Activated CD4-positive, alpha-beta memory T cell treated with anti-CD3 and anti-CD28 coated beads for 36 hours (primary cell): ENCODE measurements at regions of chr12 and their contacts with region 1.

Region 1: GRCh38 chr12:674272-674781 is 11.1 kb upstream of the NINJ2 start:
- DNase-seq: peak; percentile 90
- H3K4me3 Mint-ChIP-seq: peak overlapping the region; percentile 70
- H3K27ac Mint-ChIP-seq: peak overlapping the region; percentile 85
- H3K4me1 Mint-ChIP-seq: peaks cover 65% of the 10 kb centered on the region
- H3K27me3 Mint-ChIP-seq: peaks cover 8% of the 10 kb centered on the region

Region 2: GRCh38 chr12:662566-663292 is 11.6 kb before region 1 on chr12:
- CTCF ChIA-PET with region 1: interaction called, 8 read pairs
- POLR2A ChIA-PET with region 1: interaction called, 4 read pairs
- intact Hi-C with region 1: loop called (anchors 1 kb)
- DNase-seq: peak; percentile 4
- H3K4me3 Mint-ChIP-seq: peak overlapping the region; percentile 52
- H3K27ac Mint-ChIP-seq: peak overlapping the region; percentile 65
- H3K4me1 Mint-ChIP-seq: peaks cover 50% of the 10 kb centered on the region
- H3K27me3 Mint-ChIP-seq: no peaks in the 10 kb centered on the region

Region 3: DNA sequence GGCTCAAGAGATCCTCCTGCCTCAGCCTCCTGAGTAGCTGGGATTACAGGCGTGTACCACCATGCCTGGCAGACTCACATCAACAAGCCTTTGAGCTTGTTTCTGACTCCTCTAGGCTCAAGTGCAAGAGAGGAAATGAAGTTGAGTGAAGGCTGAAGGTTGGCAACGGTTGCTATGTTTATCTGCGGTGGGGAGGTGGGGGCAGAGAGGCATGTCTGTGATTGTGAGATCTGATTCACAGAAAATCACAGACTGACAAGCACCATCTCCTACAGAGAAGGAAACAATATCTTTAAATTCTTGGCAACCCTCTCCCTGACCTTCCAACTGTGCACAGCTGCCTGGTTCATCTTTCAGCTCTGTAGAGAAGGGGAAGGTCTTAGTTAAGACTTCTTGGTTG is 11.1 kb after region 1 on chr12:
- CTCF ChIA-PET with region 1: interaction called, 3 read pairs
- POLR2A ChIA-PET with region 1: interaction called, 12 read pairs
- intact Hi-C with region 1: loop called (anchors 1 kb)
- DNase-seq: peak; percentile 92
- H3K4me3 Mint-ChIP-seq: no peak overlapping the region
- H3K27ac Mint-ChIP-seq: peak overlapping the region; percentile 77
- H3K4me1 Mint-ChIP-seq: peaks cover 36% of the 10 kb centered on the region
- H3K27me3 Mint-ChIP-seq: no peaks in the 10 kb centered on the region

Region 4: DNA sequence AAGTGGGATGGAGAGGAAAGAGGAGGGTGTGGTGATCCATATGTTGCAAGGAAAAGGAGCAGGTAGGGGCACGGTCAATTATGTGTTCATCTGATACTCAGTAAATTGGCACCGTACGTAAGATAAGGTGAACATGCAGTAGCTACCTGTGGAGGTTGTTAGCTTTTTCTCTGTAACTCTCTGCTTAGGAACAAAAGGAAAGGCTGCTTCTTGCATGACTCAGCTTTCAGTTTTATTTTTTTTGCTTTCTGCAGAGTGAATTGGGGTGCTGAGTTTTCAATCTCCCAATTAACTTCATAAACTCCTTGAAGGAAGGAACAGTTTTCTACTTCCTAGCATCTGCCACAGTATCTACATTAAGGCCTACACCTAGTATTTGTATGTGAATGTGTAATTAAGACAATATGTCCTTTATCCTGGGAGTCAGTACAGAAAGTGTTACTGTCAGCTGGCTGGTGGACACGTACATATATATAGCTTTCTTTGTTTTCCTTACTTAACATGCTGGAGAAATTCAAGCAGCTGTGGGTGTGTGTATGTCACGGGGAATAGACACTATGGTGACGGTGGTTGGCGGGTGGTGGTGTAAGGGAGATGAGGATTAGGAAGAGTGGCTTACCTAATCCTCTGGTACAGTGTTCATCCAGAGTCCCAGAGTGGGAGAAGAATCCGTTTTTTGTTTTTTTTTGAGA is 38.0 kb after region 1 on chr12:
- CTCF ChIA-PET with region 1: no interaction called
- POLR2A ChIA-PET with region 1: interaction called, 3 read pairs
- intact Hi-C with region 1: loop called (anchors 1 kb)
- DNase-seq: no peak
- H3K4me3 Mint-ChIP-seq: no peak overlapping the region
- H3K27ac Mint-ChIP-seq: no peak overlapping the region
- H3K4me1 Mint-ChIP-seq: peaks cover 27% of the 10 kb centered on the region
- H3K27me3 Mint-ChIP-seq: no peaks in the 10 kb centered on the region

Region 5: GRCh38 chr12:738712-739111 is 64.4 kb after region 1 on chr12:
- CTCF ChIA-PET with region 1: no interaction called
- POLR2A ChIA-PET with region 1: no interaction called
- intact Hi-C with region 1: loop called (anchors 1 kb)
- DNase-seq: no peak
- H3K4me3 Mint-ChIP-seq: no peak overlapping the region
- H3K27ac Mint-ChIP-seq: no peak overlapping the region
- H3K4me1 Mint-ChIP-seq: peaks cover 15% of the 10 kb centered on the region
- H3K27me3 Mint-ChIP-seq: no peaks in the 10 kb centered on the region

Region 6: DNA sequence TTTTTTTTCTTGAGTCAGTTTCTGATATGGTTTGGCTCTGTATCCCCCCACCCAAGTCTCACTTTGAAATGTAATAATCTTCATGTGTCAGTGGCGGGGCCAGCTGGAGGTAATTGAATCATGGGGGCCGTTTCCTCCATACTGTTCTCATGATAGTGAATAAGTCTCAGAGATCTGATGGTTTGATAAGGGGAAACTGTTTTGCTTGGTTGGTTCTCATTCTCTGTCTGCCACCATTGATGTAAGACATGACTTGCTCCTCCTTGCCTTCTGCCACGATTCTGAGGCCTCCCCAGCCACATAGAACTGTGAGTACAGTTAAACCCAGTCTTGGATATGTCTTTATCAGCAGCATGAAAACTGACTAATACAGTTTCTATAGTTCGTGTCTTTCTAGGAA is 121.0 kb after region 1 on chr12:
- CTCF ChIA-PET with region 1: interaction called, 3 read pairs
- POLR2A ChIA-PET with region 1: no interaction called
- intact Hi-C with region 1: loop called (anchors 1 kb)
- DNase-seq: peak; percentile 85
- H3K4me3 Mint-ChIP-seq: peak overlapping the region; percentile 35
- H3K27ac Mint-ChIP-seq: peak overlapping the region; percentile 79
- H3K4me1 Mint-ChIP-seq: peaks cover 81% of the 10 kb centered on the region
- H3K27me3 Mint-ChIP-seq: no peaks in the 10 kb centered on the region